ENCODE measurements at regions of chr15 and their contacts with region 1.

Region 1: GRCh38 chr15:51380999-51381795 is 39.7 kb downstream of the GLDN start:
- H3K4me3 Mint-ChIP-seq: no peak overlapping the region
- H3K27ac Mint-ChIP-seq: no peak overlapping the region
- H3K4me1 Mint-ChIP-seq: peaks cover 12% of the 10 kb centered on the region
- H3K27me3 Mint-ChIP-seq: peaks cover 24% of the 10 kb centered on the region

Region 2: DNA sequence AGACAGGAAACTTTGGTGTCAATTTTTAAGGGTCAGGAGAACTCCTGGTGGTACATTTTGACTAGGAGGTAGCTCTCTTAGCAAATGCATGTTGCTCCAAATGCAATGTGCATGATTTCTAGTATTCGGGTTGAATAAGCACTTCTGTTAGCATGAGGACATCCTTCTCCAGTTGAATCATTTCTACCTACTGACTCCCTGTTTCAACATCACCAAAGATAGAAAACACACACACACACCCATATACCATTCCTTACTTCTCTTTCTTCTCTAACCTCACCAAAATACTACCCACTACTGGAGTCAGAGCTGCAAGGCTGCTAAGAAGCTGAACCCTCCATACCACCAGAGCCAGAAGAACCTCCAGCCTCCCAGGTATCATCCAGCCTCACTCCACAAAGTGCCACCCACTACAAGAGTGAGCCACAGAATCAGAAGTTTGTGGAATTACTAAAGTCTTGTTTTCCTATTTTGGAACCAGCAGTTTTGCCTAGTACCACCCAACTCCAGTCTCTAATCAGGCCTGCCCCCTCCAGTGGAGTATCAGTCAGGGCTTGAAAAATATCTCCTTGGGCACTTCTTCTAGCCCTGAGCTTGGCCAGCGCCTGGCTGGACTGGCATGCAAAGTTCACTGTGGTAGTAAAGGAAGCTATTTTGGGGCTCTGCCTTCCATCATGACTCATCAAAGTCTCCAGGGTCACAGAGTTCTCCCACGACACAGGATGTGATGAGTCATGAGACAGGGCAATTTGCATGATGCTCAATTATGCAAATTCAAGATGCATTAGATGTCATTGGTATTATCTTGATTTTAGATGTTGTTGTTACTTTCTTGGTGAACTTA is 153.0 kb before region 1 on chr15:
- intact Hi-C with region 1: loop called (anchors 5 kb)
- H3K4me3 Mint-ChIP-seq: no peak overlapping the region
- H3K27ac Mint-ChIP-seq: no peak overlapping the region
- H3K4me1 Mint-ChIP-seq: peaks cover 39% of the 10 kb centered on the region
- H3K27me3 Mint-ChIP-seq: no peaks in the 10 kb centered on the region

Region 3: DNA sequence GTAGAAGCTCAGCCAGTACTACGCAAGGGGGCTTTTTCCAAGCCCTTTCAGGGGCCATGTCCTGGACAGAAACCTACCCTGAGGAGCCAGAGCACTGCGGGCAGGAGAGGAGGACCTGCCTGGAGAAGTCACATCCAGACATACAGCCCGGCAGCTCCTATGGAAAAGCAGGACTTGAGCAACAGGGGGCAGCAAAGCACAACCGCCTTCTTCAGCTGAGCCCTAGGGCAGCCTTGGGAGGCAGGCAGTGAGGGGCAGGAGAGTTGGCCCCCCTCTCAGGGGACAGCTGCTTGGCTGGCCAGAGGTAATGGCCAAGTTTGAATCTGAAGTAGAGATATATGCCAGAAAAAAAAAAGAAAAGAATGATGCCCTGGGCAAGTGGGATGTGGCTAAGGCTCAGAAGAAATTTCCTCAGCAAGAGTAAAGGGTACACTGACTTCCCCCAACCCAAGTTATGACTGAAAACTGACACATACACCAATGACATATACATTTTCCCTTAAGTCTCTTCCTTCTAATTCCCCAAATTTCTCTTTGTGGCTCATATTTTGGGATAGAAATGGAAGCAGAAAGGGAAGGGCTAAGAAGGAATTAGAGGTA is 99.7 kb before region 1 on chr15:
- intact Hi-C with region 1: loop called (anchors 1 kb)
- H3K4me3 Mint-ChIP-seq: no peak overlapping the region
- H3K27ac Mint-ChIP-seq: no peak overlapping the region
- H3K4me1 Mint-ChIP-seq: peaks cover 10% of the 10 kb centered on the region
- H3K27me3 Mint-ChIP-seq: peaks cover 8% of the 10 kb centered on the region

Region 4: DNA sequence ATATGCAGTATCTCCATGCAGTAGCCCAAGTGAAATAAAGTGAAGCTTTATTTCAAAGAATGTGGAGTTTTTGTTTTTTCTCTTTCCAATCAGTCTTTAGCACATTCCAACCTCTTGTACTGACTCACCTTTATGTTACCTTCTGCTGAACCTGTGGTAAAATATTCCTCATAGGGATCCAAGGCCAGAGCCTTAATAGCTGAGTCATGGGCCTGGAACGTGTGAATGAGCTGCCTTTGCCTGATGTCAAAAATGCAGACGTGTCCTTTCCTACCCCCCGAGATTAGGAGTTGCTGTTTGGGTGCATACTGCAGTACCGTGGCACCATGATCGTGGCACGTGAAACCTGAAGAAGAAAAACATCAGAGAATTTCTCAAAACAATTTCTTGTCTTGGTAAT is 68.8 kb after region 1 on chr15:
- intact Hi-C with region 1: no loop called
- H3K4me3 Mint-ChIP-seq: no peak overlapping the region
- H3K27ac Mint-ChIP-seq: no peak overlapping the region
- H3K4me1 Mint-ChIP-seq: no peaks in the 10 kb centered on the region
- H3K27me3 Mint-ChIP-seq: no peaks in the 10 kb centered on the region

Measured in dendritic cell treated with granulocyte-macrophage colony-stimulating factor and Interleukin-4, amounts not matched to agents 40 ng/mL and 50 ng/mL, for 4 days (primary cell).